HepG2 (cell line): ENCODE measurements at regions of chr11 and their contacts with region 1.

Region 1: DNA sequence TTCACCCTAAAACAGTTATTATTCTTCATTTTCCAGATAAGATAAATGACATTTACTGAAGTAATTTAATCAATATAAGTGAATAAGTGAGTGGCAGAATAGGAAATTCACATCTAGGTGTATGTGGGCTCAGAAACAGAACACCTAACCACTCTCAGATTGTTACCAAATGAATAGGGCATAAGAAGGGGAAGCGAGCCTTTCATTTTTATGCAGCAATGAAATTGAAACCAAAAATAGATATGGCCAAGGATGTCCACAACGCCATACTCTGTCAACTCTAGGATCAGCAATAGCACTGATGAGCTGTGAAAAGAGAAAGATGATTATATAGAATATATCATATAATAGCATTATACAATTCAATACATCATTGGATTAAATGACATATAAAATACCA is 398.1 kb upstream of the API5 start:
- DNase-seq: no peak
- ATAC-seq: no peak
- H3K4me3 ChIP-seq: no peak overlapping the region
- H3K27ac ChIP-seq: no peak overlapping the region
- H3K4me1 ChIP-seq: no peaks in the 10 kb centered on the region
- H3K27me3 ChIP-seq: no peaks in the 10 kb centered on the region
- CTCF ChIP-seq: no peak
- EP300 ChIP-seq: no peak
- POLR2A ChIP-seq: no peak
- RAD21 ChIP-seq: no peak

Region 2: DNA sequence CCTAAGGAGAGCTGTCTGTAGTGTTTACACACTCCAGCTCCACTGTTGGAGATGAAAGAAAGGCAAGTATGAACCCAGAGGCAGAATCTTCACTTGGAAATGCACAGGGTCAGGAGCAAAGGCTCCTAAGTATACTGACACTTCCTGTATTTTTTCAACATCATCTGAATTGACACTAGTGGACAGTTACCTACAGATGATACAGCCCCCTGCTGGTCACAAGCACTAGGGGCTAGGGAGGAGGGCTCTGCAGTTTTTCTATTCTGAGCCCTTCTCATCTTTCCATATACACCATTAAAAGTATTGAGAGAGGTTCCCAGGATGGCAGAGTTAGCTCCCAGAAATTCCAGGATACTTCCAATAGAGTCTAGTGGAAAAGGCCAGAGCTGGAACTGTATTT is 107.7 kb after region 1 on chr11:
- CTCF ChIA-PET with region 1: no interaction called
- POLR2A ChIA-PET with region 1: no interaction called
- in situ Hi-C with region 1: loop called (anchors 25 kb)
- intact Hi-C with region 1: no loop called
- DNase-seq: peak; percentile 13
- ATAC-seq: peak; percentile 96
- H3K4me3 ChIP-seq: no peak overlapping the region
- H3K27ac ChIP-seq: no peak overlapping the region
- H3K4me1 ChIP-seq: no peaks in the 10 kb centered on the region
- H3K27me3 ChIP-seq: no peaks in the 10 kb centered on the region
- CTCF ChIP-seq: peak; percentile 22; the same call in 1 of the 2 replicates
- EP300 ChIP-seq: no peak
- POLR2A ChIP-seq: no peak
- RAD21 ChIP-seq: no peak